Activated T-helper 1 cell treated with anti-CD3 and anti-CD28 coated beads, Interleukin-12 subunit alpha, Interleukin-12 subunit beta, Interleukin-2, Interleukin-4 antibody, amounts not matched to agents 30 ng/mL and 10 ng/mL and 1 ng/mL, durations not matched to agents 14 hours and 24 hours and 36 hours (primary cell): ENCODE measurements at regions of chr2 and their contacts with region 1.

Region 1: DNA sequence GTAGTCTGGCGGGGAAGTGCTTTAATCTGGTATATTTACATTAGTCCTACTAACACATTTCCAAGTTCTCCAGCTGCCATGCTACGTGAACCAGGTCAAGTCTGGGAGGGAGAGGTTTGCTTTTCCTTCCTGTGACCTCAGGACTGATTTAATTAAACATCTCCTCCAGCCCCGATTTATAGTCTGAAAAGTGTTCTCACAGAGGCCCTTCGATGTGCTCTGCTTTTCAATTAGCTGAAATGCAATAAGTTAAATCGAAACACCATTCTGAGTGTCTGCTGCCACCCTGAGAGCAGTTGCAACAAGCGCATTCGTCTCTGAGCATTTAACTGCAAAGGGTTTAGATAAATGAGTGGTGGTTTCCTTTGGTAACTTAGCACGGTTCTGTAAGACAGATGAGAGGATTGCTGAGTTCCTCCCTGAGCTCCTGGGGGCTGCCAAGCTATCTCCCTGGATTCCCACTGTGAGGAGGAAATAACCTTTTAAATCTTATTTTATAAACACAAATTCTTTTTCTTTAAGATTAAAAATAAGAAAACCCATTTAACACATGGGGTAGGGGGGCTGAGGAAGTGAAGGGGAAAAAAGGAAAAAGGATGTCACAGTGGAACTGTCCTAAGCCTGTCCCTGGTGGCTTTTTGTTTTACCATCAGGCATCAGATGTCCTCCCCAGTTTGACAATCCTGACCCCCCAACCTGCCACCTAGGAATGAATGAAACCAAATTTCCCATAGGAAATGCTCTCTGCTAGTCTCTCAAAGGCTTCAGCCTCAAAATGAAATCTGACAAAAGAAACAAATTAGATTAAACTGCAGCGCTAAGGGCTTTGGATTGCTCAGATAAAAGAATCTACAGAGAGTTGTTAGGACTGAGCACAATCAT is 56.5 kb upstream of the CREB1 start:
- DNase-seq: peak; percentile 47
- H3K4me3 Mint-ChIP-seq: no peak overlapping the region
- H3K27ac Mint-ChIP-seq: no peak overlapping the region
- H3K4me1 Mint-ChIP-seq: peaks cover 26% of the 10 kb centered on the region
- H3K27me3 Mint-ChIP-seq: no peaks in the 10 kb centered on the region

Region 2: GRCh38 chr2:206693399-206694137 is 779.7 kb before region 1 on chr2:
- intact Hi-C with region 1: loop called (anchors 1 kb)
- DNase-seq: peak; percentile 2
- H3K4me3 Mint-ChIP-seq: no peak overlapping the region
- H3K27ac Mint-ChIP-seq: no peak overlapping the region
- H3K4me1 Mint-ChIP-seq: no peaks in the 10 kb centered on the region
- H3K27me3 Mint-ChIP-seq: peaks cover 2% of the 10 kb centered on the region

Region 3: DNA sequence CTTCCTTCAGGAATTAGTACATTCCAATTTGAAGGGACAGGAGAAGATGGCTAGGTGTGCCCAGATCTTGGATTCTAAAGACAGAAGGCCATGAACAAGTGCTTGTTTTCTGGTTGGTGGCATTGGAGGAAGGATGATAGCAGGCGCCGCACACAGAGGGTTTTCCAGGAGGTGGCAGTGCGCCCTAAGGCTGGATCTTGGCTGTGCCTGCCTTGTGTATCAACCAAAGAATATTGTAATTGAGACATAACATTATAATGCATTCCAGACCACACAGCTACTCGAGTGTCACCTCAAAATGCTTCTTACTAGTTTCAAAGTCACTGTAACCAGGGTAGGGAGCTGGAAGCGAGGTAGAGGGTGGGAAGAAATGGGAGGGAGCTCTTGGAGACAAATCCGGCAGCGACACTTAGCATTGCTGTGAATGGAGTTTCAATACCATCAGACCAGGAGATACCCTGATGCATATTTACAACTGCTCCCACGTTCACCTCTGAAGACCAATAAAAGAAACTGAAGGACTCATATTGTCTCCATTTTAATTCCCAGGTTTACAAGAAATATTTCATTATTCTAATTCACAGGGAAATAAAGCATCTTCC is 491.4 kb before region 1 on chr2:
- intact Hi-C with region 1: loop called (anchors 1 kb)
- DNase-seq: peak; percentile 9
- H3K4me3 Mint-ChIP-seq: no peak overlapping the region
- H3K27ac Mint-ChIP-seq: no peak overlapping the region
- H3K4me1 Mint-ChIP-seq: peaks cover 13% of the 10 kb centered on the region
- H3K27me3 Mint-ChIP-seq: no peaks in the 10 kb centered on the region

Region 4: DNA sequence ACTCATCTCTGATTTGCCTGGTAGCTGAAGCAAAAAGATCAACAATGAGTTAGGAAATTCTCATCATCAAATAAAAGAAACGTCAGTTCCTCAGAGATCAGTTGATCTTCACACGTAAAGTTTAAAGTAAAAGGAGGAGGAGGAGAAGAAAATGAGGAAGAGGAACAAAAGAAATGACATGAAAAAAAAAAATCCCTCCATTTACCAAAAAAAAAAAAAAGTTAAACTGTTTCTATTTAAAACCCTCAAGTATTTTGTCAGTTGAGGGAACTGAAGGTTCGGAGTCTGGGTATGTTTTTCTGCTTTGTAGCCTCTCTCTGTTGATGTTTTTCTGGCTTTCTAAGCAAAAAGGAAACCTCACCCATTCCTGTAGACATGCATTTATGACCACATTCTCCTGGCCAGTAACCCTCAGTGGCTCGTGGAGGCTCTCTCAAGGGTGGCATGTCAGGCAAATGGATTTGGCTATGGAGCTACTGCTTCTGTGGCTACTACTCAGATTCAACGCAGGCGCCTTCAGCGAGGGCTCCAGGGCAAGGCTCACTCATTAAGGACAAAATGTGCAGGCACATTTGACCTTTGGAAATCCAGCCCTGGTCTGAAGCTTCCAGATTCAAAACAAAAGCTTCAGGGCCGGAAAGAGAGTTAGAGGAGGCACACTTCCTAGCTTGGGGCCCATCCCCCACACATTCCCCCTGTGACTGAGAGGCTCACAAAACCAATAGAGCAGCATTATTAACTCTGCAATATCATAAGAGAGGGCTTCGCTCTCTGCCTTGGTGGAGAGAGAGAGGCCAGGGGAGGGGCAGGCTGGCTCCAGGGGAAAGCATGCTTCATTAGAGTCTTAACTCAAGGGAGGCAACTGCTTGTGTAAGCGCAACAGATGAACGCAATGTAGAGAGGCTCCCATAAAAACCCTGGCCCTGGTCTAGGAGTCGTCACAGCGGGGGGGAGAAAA is 329.8 kb before region 1 on chr2:
- intact Hi-C with region 1: loop called (anchors 1 kb)
- DNase-seq: peak; percentile 46
- H3K4me3 Mint-ChIP-seq: peak overlapping the region; percentile 61
- H3K27ac Mint-ChIP-seq: peak overlapping the region; percentile 90
- H3K4me1 Mint-ChIP-seq: peaks cover 59% of the 10 kb centered on the region
- H3K27me3 Mint-ChIP-seq: peaks cover 6% of the 10 kb centered on the region

Region 5: DNA sequence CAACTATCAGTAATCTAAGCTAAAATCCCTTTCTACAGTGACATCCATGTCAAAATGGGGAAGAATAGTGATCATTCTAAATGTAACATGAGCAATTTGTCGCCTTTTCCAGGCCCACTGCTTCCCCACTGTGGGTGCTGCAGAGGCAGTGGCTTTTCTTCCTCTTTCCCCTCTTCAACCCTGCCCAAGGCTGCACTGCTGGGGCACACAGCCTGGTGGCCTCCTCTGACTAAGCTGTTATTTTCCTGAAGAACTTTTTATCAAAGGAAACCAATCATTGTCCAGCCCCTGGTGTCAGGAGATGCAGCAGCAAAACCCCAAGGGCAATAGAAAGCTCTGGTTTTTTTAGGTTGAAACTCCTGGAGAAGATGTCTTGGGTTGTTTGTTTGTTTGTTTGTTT is 189.9 kb before region 1 on chr2:
- intact Hi-C with region 1: loop called (anchors 5 kb)
- DNase-seq: no peak
- H3K4me3 Mint-ChIP-seq: peak overlapping the region; percentile 53
- H3K27ac Mint-ChIP-seq: peak overlapping the region; percentile 85
- H3K4me1 Mint-ChIP-seq: peaks cover 76% of the 10 kb centered on the region
- H3K27me3 Mint-ChIP-seq: no peaks in the 10 kb centered on the region

Region 6: DNA sequence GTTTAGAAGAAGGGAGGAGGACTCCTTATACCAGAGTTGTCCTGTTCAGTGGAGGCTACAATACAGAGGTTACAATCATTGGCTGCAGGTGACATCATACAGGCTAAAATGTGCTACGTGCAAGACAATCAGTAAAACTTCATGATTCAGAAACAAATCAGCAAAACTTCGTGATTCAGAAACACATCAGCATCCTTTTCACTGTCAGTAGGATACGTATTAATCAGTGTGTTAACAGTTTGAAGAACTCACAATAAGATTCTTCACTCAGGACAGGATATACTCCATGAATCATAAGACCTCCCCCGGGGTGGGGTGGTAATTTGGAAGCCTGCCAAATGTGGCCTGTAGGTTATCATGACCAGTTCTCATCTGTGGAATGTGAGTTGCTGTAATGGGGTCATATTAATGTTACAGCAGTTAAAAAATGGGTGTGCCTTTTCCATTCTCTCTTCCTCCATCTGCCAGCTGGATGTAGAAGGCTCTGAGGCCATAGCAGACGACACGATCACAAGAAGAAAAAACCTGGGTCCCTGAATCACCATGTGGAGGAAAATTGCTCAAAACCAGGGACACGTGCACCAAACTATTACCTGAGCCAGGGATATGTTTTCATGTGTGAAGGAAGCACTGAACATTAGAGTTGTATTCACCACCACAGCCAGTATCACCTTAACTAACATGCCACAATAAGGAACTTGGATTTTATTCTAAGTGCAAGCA is 78.3 kb before region 1 on chr2:
- intact Hi-C with region 1: no loop called
- DNase-seq: no peak
- H3K4me3 Mint-ChIP-seq: no peak overlapping the region
- H3K27ac Mint-ChIP-seq: no peak overlapping the region
- H3K4me1 Mint-ChIP-seq: no peaks in the 10 kb centered on the region
- H3K27me3 Mint-ChIP-seq: no peaks in the 10 kb centered on the region